PC-9 (cell line): ENCODE measurements at regions of chr17 and their contacts with region 1.

Region 1: DNA sequence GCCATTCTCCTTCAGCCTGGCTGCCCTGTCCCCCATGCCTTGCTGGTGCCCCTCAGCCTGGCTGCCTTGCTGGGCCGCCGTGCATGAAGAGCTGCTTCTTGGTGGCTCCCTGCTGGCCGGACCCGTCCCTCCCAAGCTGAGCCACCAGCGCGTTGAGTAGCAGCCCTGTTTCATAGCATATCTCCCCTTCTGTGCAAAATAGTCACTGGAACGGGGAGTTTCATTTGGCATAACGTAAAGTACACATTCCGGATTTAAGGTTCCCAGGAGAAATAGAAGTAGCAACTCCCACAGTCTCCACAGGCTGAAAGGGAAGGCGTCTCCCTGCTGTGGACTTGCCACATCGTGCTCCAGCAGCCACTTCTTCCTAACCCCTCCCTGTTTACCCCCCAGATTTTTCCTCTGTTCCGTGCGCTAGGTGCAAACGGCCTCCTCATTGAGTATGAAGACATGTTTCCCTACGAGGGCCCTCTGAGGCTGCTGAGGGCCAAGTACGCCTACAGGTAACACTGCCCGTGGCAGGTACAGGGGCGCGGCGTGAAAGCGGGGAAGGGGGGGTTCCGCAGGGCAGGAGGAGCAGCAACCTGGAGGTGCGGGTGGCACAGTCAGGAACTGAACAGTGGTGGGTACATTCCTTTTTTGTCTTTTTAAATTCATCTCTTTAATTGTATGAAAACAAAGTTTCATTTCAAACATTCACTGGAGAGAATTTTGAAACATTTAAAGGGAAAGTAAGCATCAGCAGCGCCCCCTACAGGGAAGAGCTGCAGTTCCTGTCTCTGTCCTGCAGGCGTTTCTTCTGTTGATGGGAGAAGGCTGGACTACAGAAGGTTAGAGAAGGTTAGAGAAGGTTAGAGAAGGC is 5.8 kb upstream of the OGFOD3 start:
- DNase-seq: peak in 1 of 2 experiments; percentile 31
- H3K4me3 ChIP-seq: no peak overlapping the region
- H3K27ac ChIP-seq: no peak overlapping the region
- H3K4me1 ChIP-seq: peaks cover 7% of the 10 kb centered on the region
- H3K27me3 ChIP-seq: no peaks in the 10 kb centered on the region
- CTCF ChIP-seq: peak; percentile 76

Region 2: GRCh38 chr17:82577300-82577699 is 153.1 kb after region 1 on chr17:
- CTCF ChIA-PET with region 1: interaction called, 11 read pairs
- POLR2A ChIA-PET with region 1: no interaction called
- intact Hi-C with region 1: no loop called
- DNase-seq: no peak
- H3K4me3 ChIP-seq: no peak overlapping the region
- H3K27ac ChIP-seq: no peak overlapping the region
- H3K4me1 ChIP-seq: no peaks in the 10 kb centered on the region
- H3K27me3 ChIP-seq: no peaks in the 10 kb centered on the region
- CTCF ChIP-seq: no peak